WTC11 (cell line): ENCODE measurements at regions of chrX and their contacts with region 1.

Region 1: DNA sequence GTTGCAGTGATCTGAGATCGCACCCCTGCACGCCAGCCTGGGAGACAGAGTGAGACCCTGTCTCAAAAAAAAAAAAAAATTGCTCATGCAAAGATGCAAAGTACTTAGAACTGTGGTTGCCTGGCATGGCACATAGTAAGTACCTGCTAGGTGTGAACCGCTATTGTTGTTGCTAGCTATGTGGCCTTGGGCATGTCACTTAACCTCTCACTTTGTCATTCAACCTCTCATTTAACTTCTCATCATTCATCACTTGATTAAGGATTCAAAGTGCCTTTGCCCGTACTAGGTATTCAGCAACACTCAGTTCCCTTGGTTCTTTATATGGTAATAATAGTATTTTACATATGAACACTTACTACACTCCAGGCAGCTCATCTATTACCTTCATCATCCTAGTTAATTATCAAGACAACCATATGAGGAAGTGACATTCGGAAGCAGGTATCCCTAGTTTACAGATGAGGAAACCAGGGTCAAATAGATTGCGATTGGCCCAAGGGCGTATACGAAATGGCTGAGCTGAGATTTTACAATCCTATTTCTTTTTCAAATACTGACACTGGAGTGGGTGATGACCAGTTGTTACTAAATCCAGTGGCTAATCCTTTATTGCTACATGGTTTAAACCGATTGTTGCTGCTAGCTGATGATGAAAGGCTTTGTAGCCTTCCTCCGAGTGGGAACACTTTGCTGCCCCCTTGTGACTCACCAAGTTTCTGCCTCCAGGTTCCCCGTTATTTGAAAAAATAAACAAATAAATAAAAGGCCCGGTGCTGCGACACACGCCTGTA is 28.8 kb upstream of the SOWAHD start:
- DNase-seq: peak; percentile 59
- ATAC-seq: peak; percentile 67
- H3K4me3 Mint-ChIP-seq: no peak overlapping the region; the same call in 1 of the 2 replicates
- H3K27ac Mint-ChIP-seq: no peak overlapping the region
- H3K4me1 Mint-ChIP-seq: peaks cover 19% of the 10 kb centered on the region
- H3K27me3 Mint-ChIP-seq: no peaks in the 10 kb centered on the region; the same call in 1 of the 2 replicates
- CTCF ChIP-seq: peak; percentile 22; the same call in 1 of the 2 replicates

Region 2: DNA sequence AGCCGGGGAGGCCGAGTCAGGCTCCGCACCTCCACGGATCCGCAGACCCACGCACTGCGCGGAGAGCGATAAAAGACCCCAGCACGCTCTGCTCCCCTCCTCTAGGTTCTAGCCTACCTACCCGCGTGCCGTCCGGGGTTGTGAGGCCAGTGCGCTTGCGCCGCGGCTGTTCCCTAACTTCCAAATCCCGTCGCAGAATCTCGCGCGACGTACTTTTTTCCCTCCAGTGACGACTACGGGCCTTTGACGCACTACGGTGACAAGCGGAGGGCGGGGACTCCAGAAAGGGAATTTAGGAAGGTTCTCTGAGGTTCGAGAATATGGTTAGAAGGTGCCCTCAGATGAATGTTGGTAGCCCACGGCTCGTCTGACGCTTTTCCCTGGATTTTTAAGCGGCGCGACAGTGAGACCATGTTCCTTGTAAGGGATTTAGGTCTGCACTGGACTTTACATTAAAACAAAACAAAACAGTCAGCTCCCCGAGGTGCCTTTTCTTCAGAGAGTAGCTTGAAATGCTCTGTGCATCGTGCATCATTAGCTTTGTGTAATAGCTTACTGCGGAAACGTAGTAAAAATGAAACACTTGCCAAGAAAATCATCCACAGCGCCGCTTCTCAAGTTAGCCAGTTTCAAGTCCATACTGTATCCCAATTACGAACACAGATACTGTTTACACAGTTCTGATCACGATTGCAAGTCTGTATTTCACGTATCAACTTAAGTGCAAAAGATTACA is 123.2 kb before region 1 on chrX and contains the start of gene NKRF:
- CTCF ChIA-PET with region 1: interaction called, 25 read pairs
- POLR2A ChIA-PET with region 1: no interaction called
- DNase-seq: peak; percentile 85
- ATAC-seq: peak; percentile 77
- H3K4me3 Mint-ChIP-seq: peak within 1 kb of the TSS; percentile 81
- H3K27ac Mint-ChIP-seq: peak within 1 kb of the TSS; percentile 86
- H3K4me1 Mint-ChIP-seq: peaks cover 20% of the 10 kb centered on the region
- H3K27me3 Mint-ChIP-seq: peaks cover 35% of the 10 kb centered on the region
- CTCF ChIP-seq: no peak
- total RNA-seq, gene NKRF: 13.0 to 15.0 TPM (median 13.6 TPM) in 3 replicates

Region 3: DNA sequence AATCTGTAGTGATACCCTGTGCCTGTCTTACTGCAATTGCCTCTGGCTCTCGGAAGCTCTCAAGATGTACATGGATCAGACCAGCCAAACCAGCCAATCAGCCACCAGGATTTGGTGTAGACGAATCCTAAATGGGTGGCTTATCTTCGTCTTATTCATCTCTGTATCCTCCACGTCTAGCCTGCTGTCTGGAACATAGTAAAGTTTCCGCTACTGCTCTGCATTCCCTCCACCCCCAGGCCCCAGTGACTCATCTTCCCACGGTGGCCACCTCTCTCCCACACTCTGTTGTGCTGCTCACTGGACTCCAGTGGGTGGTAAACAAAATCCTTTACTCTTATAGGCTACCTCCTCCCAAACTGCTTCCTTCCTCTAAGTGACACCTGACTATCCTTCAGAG is 74.5 kb before region 1 on chrX:
- CTCF ChIA-PET with region 1: interaction called, 16 read pairs
- POLR2A ChIA-PET with region 1: no interaction called
- DNase-seq: no peak
- ATAC-seq: no peak
- H3K4me3 Mint-ChIP-seq: no peak overlapping the region
- H3K27ac Mint-ChIP-seq: peak overlapping the region; percentile 35; the same call in 1 of the 2 replicates
- H3K4me1 Mint-ChIP-seq: peaks cover 19% of the 10 kb centered on the region
- H3K27me3 Mint-ChIP-seq: no peaks in the 10 kb centered on the region
- CTCF ChIP-seq: no peak

Region 4: GRCh38 chrX:119685225-119686066 is 44.2 kb before region 1 on chrX:
- CTCF ChIA-PET with region 1: interaction called, 13 read pairs
- POLR2A ChIA-PET with region 1: no interaction called
- DNase-seq: no peak
- ATAC-seq: no peak
- H3K4me3 Mint-ChIP-seq: no peak overlapping the region
- H3K27ac Mint-ChIP-seq: peak overlapping the region; percentile 93
- H3K4me1 Mint-ChIP-seq: peaks cover 47% of the 10 kb centered on the region
- H3K27me3 Mint-ChIP-seq: no peaks in the 10 kb centered on the region
- CTCF ChIP-seq: no peak

Region 5: DNA sequence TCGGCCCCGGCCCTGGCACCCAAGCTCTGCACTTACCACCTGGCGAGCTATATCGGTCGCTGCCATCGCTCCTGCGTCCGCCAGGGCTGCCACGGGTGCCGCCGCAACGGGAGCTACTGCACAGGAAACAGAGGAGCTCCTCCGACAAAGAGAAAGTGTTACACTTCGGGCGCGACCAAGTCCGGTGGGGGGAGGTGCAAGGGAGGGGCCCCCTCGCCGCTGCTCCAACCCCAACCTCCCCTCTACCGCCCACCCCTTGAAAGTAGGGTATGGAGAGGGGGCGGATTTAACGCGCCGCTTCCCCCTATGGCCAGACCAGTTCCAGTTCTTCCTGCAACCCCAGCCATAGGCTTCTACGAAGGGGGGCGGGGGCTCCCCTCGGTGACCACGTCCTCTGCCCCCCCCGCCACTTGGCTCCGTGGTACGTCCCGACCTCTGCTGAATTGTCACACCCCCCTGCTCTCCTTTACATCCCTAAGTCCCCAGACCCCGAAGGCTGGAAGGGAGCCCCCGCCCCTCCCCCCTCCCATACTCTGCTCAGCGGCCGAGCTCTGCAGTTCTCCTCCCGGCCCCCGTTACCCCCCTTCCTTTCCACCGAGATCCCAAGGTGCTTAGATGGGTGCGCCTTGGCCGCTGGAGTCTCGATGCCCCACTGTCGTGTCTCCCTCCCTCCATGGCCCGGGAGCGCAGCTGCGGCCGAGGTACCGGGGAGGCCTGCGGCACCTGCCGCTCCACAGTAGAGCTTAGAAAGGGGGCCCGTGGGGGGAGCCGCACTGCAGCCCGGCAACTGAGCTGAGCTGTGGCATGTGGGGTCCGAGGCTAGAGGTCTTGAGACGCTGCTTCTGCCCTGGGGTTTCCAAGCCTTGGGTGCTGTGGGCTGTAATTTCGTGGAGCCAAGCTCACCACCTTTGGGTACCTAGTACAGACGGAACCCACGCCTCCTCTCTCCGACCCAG is 36.3 kb before region 1 on chrX and contains the start of gene SEPTIN6:
- CTCF ChIA-PET with region 1: interaction called, 35 read pairs
- POLR2A ChIA-PET with region 1: no interaction called
- DNase-seq: peak; percentile 86
- ATAC-seq: peak; percentile 79
- H3K4me3 Mint-ChIP-seq: peak within 1 kb of the TSS; percentile 91
- H3K27ac Mint-ChIP-seq: peak within 1 kb of the TSS; percentile 64; the same call in 1 of the 2 replicates
- H3K4me1 Mint-ChIP-seq: peaks cover 41% of the 10 kb centered on the region
- H3K27me3 Mint-ChIP-seq: peaks cover 7% of the 10 kb centered on the region
- CTCF ChIP-seq: no peak
- total RNA-seq, gene SEPTIN6: 52.1 to 62.9 TPM (median 53.6 TPM) in 3 replicates

Region 6: GRCh38 chrX:119887721-119888425 is 158.3 kb after region 1 on chrX:
- CTCF ChIA-PET with region 1: interaction called, 10 read pairs
- POLR2A ChIA-PET with region 1: no interaction called
- DNase-seq: peak; percentile 86
- ATAC-seq: peak; percentile 96
- H3K4me3 Mint-ChIP-seq: peak overlapping the region; percentile 64
- H3K27ac Mint-ChIP-seq: no peak overlapping the region
- H3K4me1 Mint-ChIP-seq: no peaks in the 10 kb centered on the region
- H3K27me3 Mint-ChIP-seq: no peaks in the 10 kb centered on the region
- CTCF ChIP-seq: peak; percentile 64